HEK293T (cell line): ENCODE measurements at regions of chr3 and their contacts with region 1.

Region 1: DNA sequence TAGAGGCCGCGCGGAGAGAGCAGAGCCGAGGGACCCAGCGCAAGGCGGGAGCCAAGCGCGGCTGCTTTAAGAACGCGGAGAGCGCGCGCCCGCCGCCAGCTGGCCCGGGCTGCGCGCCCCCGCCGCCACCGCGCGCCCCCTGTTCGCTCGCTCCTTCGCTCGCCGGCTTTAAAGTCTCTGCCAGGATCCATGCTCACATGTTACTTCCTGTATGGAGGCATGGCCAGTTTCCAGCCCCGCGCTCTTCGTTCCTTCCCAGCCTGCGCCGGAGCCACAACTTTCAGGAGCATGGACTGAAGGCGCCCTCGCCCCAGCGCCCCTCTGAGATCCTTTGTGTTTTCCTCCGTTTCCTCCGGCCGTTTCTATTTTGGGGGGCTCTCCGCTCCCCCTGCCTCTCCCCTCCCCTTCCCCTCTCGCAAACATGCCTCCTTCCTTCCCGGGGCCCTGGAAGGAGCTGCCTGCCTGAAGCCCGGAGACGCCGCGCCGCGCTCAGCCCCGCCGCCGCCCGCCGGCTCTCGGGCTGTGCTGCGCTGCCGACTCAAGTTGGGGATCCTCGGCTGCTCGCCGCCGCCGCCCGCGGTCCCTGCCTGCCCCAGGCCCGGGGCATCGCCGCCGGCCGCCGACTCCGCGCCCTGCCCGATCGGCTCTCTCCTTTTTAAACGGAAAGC is at the start of gene PTPRG:
- DNase-seq: peak; percentile 86

Region 2: DNA sequence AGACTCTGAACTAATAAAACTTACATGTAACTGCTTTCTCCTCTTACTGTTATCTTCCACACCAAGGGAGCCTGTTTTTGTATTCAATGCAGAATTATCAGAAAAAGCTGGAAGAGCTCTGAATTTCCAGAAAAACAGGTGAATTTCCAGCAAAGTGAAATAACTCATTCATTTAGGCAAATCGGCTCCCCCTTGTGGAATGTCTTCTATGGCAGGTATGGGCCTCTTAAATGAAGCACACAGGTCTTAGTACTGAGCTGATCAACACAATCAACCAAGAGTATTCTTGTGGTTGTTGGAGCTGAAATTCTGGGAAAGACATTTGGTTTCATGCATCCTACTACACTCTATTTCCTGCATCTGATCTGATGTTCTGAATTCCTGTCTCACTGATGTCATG is 31.2 kb before region 1 on chr3:
- CTCF ChIA-PET with region 1: interaction called, 4 read pairs
- POLR2A ChIA-PET with region 1: interaction called, 12 read pairs
- DNase-seq: peak; percentile 27

Region 3: GRCh38 chr3:61589856-61590255 is 28.3 kb after region 1 on chr3:
- CTCF ChIA-PET with region 1: no interaction called
- POLR2A ChIA-PET with region 1: no interaction called
- DNase-seq: no peak

Region 4: GRCh38 chr3:61637088-61638051 is 75.9 kb after region 1 on chr3:
- CTCF ChIA-PET with region 1: no interaction called
- POLR2A ChIA-PET with region 1: interaction called, 11 read pairs
- DNase-seq: no peak